Transverse colon (tissue), 4 donors: ENCODE measurements at regions of chr1 and their contacts with region 1.

Region 1: GRCh38 chr1:30816211-30817076 is 58.9 kb upstream of the LAPTM5 start:
- DNase-seq: peak; percentile 41
- H3K4me3 ChIP-seq: no peak overlapping the region
- H3K27ac ChIP-seq: peak overlapping the region; percentile 69 to 90 (median 81)
- H3K4me1 ChIP-seq: peaks cover 5 to 14% (median 9%) of the 10 kb centered on the region in 4 donors
- H3K27me3 ChIP-seq: peaks cover 6% of the 10 kb centered on the region
- CTCF ChIP-seq: no peak
- EP300 ChIP-seq: no peak
- POLR2A ChIP-seq: no peak

Region 2: DNA sequence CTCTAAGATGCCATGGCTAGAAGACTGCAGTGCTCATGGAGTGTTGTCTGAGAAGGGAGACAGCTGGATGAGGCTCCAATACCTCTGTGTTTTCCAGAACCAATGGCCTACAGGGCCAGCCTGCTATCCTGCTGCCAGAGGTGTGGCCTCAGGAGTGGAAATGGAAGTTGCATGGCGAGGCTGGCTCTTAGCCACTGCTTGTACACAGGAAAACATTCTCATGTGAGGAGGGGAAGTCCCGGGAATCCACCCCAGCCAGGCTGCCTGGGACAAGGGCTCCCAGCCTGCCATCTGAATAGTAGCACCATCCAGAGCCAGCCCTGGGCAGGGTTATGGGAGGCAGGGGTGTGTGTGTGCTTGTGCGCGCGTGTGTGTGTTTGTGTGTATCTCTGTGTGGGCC is 35.6 kb after region 1 on chr1:
- in situ Hi-C with region 1: no loop called
- intact Hi-C with region 1: no loop called
- DNase-seq: peak; percentile 73
- H3K4me3 ChIP-seq: no peak overlapping the region
- H3K27ac ChIP-seq: peak overlapping the region in 2 of 4 donors; percentile 23 to 25
- H3K4me1 ChIP-seq: peaks cover 0 to 12% (median 9%) of the 10 kb centered on the region in 4 donors
- H3K27me3 ChIP-seq: no peaks in the 10 kb centered on the region
- CTCF ChIP-seq: no peak
- EP300 ChIP-seq: no peak
- POLR2A ChIP-seq: no peak

Region 3: DNA sequence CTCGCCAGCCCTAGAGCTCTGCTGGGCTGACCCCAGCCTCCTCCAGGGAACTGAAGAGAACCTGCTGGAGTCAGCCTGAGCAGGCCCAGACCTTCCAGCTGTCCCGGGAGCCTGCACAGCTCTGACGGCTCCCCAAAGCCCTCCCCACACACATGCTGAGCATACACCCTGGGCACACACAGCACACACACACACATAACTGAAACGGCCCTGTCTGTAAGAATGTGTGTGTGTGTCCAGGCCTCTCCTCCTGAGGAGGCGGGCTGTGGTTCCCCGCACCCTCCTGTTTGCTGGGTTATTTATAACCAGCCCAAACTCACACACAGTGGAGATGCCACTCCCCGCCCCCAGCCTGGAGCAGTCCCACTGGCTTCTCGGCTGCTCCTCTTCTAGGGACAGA is 71.9 kb after region 1 on chr1:
- in situ Hi-C with region 1: no loop called
- intact Hi-C with region 1: loop called (anchors 5 kb)
- DNase-seq: peak; percentile 64
- H3K4me3 ChIP-seq: no peak overlapping the region
- H3K27ac ChIP-seq: peak overlapping the region; percentile 71 to 93 (median 88)
- H3K4me1 ChIP-seq: peaks cover 8 to 46% (median 35%) of the 10 kb centered on the region in 4 donors
- H3K27me3 ChIP-seq: no peaks in the 10 kb centered on the region
- CTCF ChIP-seq: no peak
- EP300 ChIP-seq: no peak
- POLR2A ChIP-seq: no peak